ENCODE measurements at regions of chr10 and their contacts with region 1.

Region 1: GRCh38 chr10:8360365-8360764 is 305.9 kb downstream of the GATA3 start:
- DNase-seq: no peak
- H3K4me3 Mint-ChIP-seq: peak overlapping the region; percentile 13
- H3K27ac Mint-ChIP-seq: peak overlapping the region; percentile 61
- H3K4me1 Mint-ChIP-seq: peaks cover 32% of the 10 kb centered on the region
- H3K27me3 Mint-ChIP-seq: peaks cover 12% of the 10 kb centered on the region

Region 2: GRCh38 chr10:8059959-8060703 is 300.2 kb before region 1 on chr10:
- intact Hi-C with region 1: loop called (anchors 1 kb)
- DNase-seq: peak; percentile 92
- H3K4me3 Mint-ChIP-seq: peak overlapping the region; percentile 90
- H3K27ac Mint-ChIP-seq: peak overlapping the region; percentile 93
- H3K4me1 Mint-ChIP-seq: peaks cover 70% of the 10 kb centered on the region
- H3K27me3 Mint-ChIP-seq: peaks cover 2% of the 10 kb centered on the region

Region 3: DNA sequence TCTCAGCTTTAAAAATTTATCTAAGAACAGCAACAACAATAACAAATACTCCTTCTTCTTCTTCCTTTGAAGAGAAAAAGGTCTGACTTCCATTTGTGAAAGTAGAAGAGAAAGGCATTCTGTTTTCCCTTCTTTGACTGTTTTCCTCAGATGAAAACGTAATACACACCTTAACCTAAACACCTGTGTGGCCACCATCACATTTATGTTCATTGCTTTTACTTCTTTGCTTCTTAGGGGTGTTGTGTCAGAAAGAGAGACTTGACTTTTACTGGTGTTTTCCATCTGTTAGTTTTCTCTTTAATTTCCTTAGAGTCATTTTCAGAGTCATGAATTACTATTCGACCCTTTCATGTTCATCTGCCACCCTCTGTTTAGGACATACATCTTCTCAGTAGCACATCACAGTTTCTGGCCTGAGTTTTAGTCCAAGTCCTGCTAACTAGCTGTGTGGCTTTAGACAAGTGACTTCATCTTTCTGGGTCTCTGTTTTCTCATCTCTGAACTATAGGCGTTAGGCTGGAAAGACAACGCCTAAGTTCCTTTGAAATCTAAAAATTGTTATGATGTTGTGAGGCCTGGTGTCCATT is 22.1 kb before region 1 on chr10:
- intact Hi-C with region 1: loop called (anchors 1 kb)
- DNase-seq: no peak
- H3K4me3 Mint-ChIP-seq: peak overlapping the region; percentile 39
- H3K27ac Mint-ChIP-seq: peak overlapping the region; percentile 91
- H3K4me1 Mint-ChIP-seq: peaks cover 15% of the 10 kb centered on the region
- H3K27me3 Mint-ChIP-seq: peaks cover 10% of the 10 kb centered on the region

Region 4: GRCh38 chr10:8416192-8416701 is 55.9 kb after region 1 on chr10:
- intact Hi-C with region 1: loop called (anchors 5 kb)
- DNase-seq: peak; percentile 83
- H3K4me3 Mint-ChIP-seq: peak overlapping the region; percentile 38
- H3K27ac Mint-ChIP-seq: peak overlapping the region; percentile 90
- H3K4me1 Mint-ChIP-seq: peaks cover 29% of the 10 kb centered on the region
- H3K27me3 Mint-ChIP-seq: peaks cover 10% of the 10 kb centered on the region

Region 5: DNA sequence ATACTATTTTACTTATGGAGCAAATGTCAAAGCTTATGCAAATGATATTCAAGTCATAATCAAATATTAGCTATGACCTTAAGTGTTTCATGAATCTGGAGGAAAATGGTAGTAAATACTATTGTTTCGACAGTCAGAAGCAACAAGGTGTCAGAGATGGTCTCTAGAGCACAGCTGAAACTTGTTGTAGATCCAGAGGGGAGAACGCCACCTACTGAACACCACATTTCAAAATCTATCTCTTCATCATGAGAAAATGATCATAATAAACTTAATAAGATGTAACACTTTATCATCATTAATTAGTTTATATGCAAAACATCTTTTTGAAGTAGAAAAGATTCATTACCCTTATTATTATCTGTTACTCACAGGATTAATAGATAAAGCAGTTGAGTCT is 112.8 kb after region 1 on chr10:
- intact Hi-C with region 1: loop called (anchors 5 kb)
- DNase-seq: peak; percentile 75
- H3K4me3 Mint-ChIP-seq: no peak overlapping the region
- H3K27ac Mint-ChIP-seq: no peak overlapping the region
- H3K4me1 Mint-ChIP-seq: peaks cover 3% of the 10 kb centered on the region
- H3K27me3 Mint-ChIP-seq: peaks cover 30% of the 10 kb centered on the region